Dorsolateral prefrontal cortex (tissue), 120 donors: ENCODE measurements at regions of chr3 and their contacts with region 1.

Region 1: GRCh38 chr3:89625945-89626344 is 518.5 kb downstream of the EPHA3 start:
- DNase-seq: no peak
- H3K4me3 ChIP-seq: no peak overlapping the region
- H3K27ac ChIP-seq: no peak overlapping the region
- H3K27me3 ChIP-seq: no peaks in the 10 kb centered on the region
- CTCF ChIP-seq: no peak

Region 2: GRCh38 chr3:89571298-89571697 is 54.6 kb before region 1 on chr3:
- intact Hi-C with region 1: no loop called
- DNase-seq: peak in 1 of 10 donors; percentile 4
- H3K4me3 ChIP-seq: peak overlapping the region in 7 of 59 donors; percentile 7 to 31 (median 17)
- H3K27ac ChIP-seq: peak overlapping the region in 6 of 59 donors; percentile 12 to 60 (median 44)
- H3K27me3 ChIP-seq: no peaks in the 10 kb centered on the region
- CTCF ChIP-seq: no peak

Region 3: GRCh38 chr3:89613241-89613640 is 12.7 kb before region 1 on chr3:
- intact Hi-C with region 1: loop called in 1 of 2 experiments (anchors 1 kb)
- DNase-seq: no peak
- H3K4me3 ChIP-seq: no peak overlapping the region
- H3K27ac ChIP-seq: no peak overlapping the region
- H3K27me3 ChIP-seq: no peaks in the 10 kb centered on the region
- CTCF ChIP-seq: no peak

Region 4: GRCh38 chr3:89702404-89702803 is 76.5 kb after region 1 on chr3:
- intact Hi-C with region 1: no loop called
- DNase-seq: no peak
- H3K4me3 ChIP-seq: no peak overlapping the region
- H3K27ac ChIP-seq: no peak overlapping the region
- H3K27me3 ChIP-seq: peaks cover 0 to 3% (median 0%) of the 10 kb centered on the region in 45 donors
- CTCF ChIP-seq: no peak